ENCODE measurements at regions of chr2 and their contacts with region 1.

Region 1: GRCh38 chr2:218898109-218898878 is 17.6 kb downstream of the WNT10A start:
- DNase-seq: peak; percentile 82
- H3K4me3 Mint-ChIP-seq: peak overlapping the region; percentile 45
- H3K27ac Mint-ChIP-seq: no peak overlapping the region
- H3K4me1 Mint-ChIP-seq: peaks cover 42% of the 10 kb centered on the region
- H3K27me3 Mint-ChIP-seq: peaks cover 27% of the 10 kb centered on the region

Region 2: GRCh38 chr2:218286570-218287459 is 611.5 kb before region 1 on chr2:
- CTCF ChIA-PET with region 1: no interaction called
- intact Hi-C with region 1: loop called (anchors 2 kb)
- DNase-seq: peak; percentile 95
- H3K4me3 Mint-ChIP-seq: peak overlapping the region; percentile 80
- H3K27ac Mint-ChIP-seq: peak overlapping the region; percentile 98
- H3K4me1 Mint-ChIP-seq: peaks cover 73% of the 10 kb centered on the region
- H3K27me3 Mint-ChIP-seq: no peaks in the 10 kb centered on the region

Region 3: GRCh38 chr2:218659258-218659987 is 238.9 kb before region 1 on chr2 and contains the starts of genes BCS1L and ZNF142:
- CTCF ChIA-PET with region 1: no interaction called
- intact Hi-C with region 1: loop called (anchors 1 kb)
- DNase-seq: peak; percentile 98
- H3K4me3 Mint-ChIP-seq: peak within 1 kb of the TSS; percentile 90
- H3K27ac Mint-ChIP-seq: peak within 1 kb of the TSS; percentile 81
- H3K4me1 Mint-ChIP-seq: peaks cover 40% of the 10 kb centered on the region
- H3K27me3 Mint-ChIP-seq: no peaks in the 10 kb centered on the region
- total RNA-seq, gene BCS1L: 61.3 to 63.6 TPM
- total RNA-seq, gene ZNF142: 28.0 to 28.4 TPM

Region 4: GRCh38 chr2:218852911-218853667 is 45.2 kb before region 1 on chr2:
- CTCF ChIA-PET with region 1: interaction called, 84 read pairs
- intact Hi-C with region 1: loop called (anchors 1 kb)
- DNase-seq: peak; percentile 80
- H3K4me3 Mint-ChIP-seq: no peak overlapping the region
- H3K27ac Mint-ChIP-seq: no peak overlapping the region
- H3K4me1 Mint-ChIP-seq: no peaks in the 10 kb centered on the region
- H3K27me3 Mint-ChIP-seq: peaks cover 39% of the 10 kb centered on the region

Region 5: DNA sequence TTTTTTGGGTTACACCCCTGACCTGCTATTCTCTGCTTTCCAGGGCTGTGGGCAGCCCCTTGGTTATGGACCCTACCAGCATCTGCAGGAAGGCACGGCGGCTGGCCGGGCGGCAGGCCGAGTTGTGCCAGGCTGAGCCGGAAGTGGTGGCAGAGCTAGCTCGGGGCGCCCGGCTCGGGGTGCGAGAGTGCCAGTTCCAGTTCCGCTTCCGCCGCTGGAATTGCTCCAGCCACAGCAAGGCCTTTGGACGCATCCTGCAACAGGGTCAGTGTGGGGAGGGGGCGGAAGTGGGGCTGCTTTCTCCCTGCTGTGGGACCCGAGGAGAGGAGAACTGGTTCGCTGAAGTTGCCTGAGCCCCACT is 27.3 kb before region 1 on chr2:
- CTCF ChIA-PET with region 1: interaction called, 947 read pairs
- intact Hi-C with region 1: loop called (anchors 1 kb)
- DNase-seq: no peak
- H3K4me3 Mint-ChIP-seq: peak overlapping the region; percentile 39
- H3K27ac Mint-ChIP-seq: no peak overlapping the region
- H3K4me1 Mint-ChIP-seq: peaks cover 16% of the 10 kb centered on the region
- H3K27me3 Mint-ChIP-seq: peaks cover 45% of the 10 kb centered on the region

Region 6: GRCh38 chr2:218908721-218909619 is 10.7 kb after region 1 on chr2:
- CTCF ChIA-PET with region 1: interaction called, 32 read pairs
- intact Hi-C with region 1: loop called (anchors 1 kb)
- DNase-seq: peak; percentile 96
- H3K4me3 Mint-ChIP-seq: peak overlapping the region; percentile 85
- H3K27ac Mint-ChIP-seq: peak overlapping the region; percentile 72
- H3K4me1 Mint-ChIP-seq: peaks cover 8% of the 10 kb centered on the region
- H3K27me3 Mint-ChIP-seq: peaks cover 18% of the 10 kb centered on the region

Region 7: GRCh38 chr2:219253753-219254590 is 355.7 kb after region 1 on chr2 and contains the start of gene TUBA4A:
- CTCF ChIA-PET with region 1: no interaction called
- intact Hi-C with region 1: loop called (anchors 2 kb)
- DNase-seq: peak; percentile 89
- H3K4me3 Mint-ChIP-seq: peak within 1 kb of the TSS; percentile 70
- H3K27ac Mint-ChIP-seq: peak within 1 kb of the TSS; percentile 95
- H3K4me1 Mint-ChIP-seq: peaks cover 49% of the 10 kb centered on the region
- H3K27me3 Mint-ChIP-seq: no peaks in the 10 kb centered on the region
- total RNA-seq, gene TUBA4A: 112 to 116 TPM

Measured in activated naive CD4-positive, alpha-beta T cell treated with anti-CD3 and anti-CD28 coated beads for 36 hours (primary cell).